Activated B cell treated with CpG ODN at 0.5 μM for 24 hours (primary cell): ENCODE measurements at regions of chr11 and their contacts with region 1.

Region 1: DNA sequence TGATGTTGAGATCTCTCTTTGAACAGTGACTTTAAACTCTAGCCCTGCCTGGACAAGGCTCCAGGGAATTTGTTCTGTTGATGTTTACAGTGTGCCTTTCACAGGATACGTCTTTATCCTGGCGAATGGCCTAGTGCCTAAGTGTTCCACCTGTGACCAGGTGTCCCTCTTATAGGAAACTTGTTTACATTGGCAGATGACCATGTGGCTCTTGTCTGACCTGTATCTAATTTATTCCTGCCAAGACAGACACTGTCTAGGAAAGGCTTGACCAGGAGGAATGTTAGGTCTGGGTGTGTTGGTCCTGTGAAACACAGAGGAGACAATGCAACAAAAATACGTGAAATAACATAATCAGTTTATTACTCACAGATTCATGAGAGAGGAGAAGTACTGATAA is 875.6 kb downstream of the METTL15 start:
- DNase-seq: no peak
- ATAC-seq: no peak
- H3K4me3 Mint-ChIP-seq: no peak overlapping the region
- H3K27ac Mint-ChIP-seq: no peak overlapping the region
- H3K4me1 Mint-ChIP-seq: no peaks in the 10 kb centered on the region
- H3K27me3 Mint-ChIP-seq: no peaks in the 10 kb centered on the region
- CTCF ChIP-seq: no peak

Region 2: GRCh38 chr11:29005401-29005980 is 21.7 kb after region 1 on chr11:
- CTCF ChIA-PET with region 1: no interaction called
- POLR2A ChIA-PET with region 1: no interaction called
- intact Hi-C with region 1: no loop called
- DNase-seq: no peak
- ATAC-seq: no peak
- H3K4me3 Mint-ChIP-seq: no peak overlapping the region
- H3K27ac Mint-ChIP-seq: no peak overlapping the region
- H3K4me1 Mint-ChIP-seq: no peaks in the 10 kb centered on the region
- H3K27me3 Mint-ChIP-seq: no peaks in the 10 kb centered on the region
- CTCF ChIP-seq: no peak

Region 3: GRCh38 chr11:29029452-29029851 is 45.7 kb after region 1 on chr11:
- CTCF ChIA-PET with region 1: no interaction called
- POLR2A ChIA-PET with region 1: no interaction called
- intact Hi-C with region 1: loop called (anchors 1 kb)
- DNase-seq: no peak
- ATAC-seq: no peak
- H3K4me3 Mint-ChIP-seq: no peak overlapping the region
- H3K27ac Mint-ChIP-seq: no peak overlapping the region
- H3K4me1 Mint-ChIP-seq: no peaks in the 10 kb centered on the region
- H3K27me3 Mint-ChIP-seq: no peaks in the 10 kb centered on the region
- CTCF ChIP-seq: no peak

Region 4: GRCh38 chr11:30652801-30653200 is 1669.0 kb after region 1 on chr11:
- CTCF ChIA-PET with region 1: no interaction called
- POLR2A ChIA-PET with region 1: no interaction called
- intact Hi-C with region 1: no loop called
- DNase-seq: no peak
- ATAC-seq: no peak
- H3K4me3 Mint-ChIP-seq: no peak overlapping the region
- H3K27ac Mint-ChIP-seq: no peak overlapping the region
- H3K4me1 Mint-ChIP-seq: no peaks in the 10 kb centered on the region
- H3K27me3 Mint-ChIP-seq: no peaks in the 10 kb centered on the region
- CTCF ChIP-seq: no peak